Posterior vena cava (tissue), 2 donors: ENCODE measurements at regions of chr15 and their contacts with region 1.

Region 1: DNA sequence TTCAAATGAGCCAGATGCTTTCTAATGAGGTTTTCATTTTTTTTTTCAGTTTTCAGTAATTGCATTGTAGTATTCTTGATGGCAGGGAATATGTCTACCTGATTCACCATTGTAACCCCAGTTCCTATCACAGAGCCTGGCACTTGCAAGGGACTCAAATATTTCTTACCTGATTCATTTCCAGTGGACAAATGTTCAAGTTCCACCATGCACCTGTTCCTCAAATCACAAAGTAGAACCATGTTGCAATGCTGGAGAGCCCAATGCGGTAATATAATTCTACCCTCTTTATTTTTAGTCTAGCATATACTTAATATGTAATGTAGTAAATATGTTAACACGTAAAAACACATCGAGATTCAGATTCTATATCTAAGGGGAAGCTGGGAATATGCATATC is 722.6 kb downstream of the AGBL1 start:
- DNase-seq: no peak

Region 2: GRCh38 chr15:86973376-86973775 is 171.1 kb after region 1 on chr15:
- intact Hi-C with region 1: loop called in 1 of 2 experiments (anchors 5 kb)
- DNase-seq: no peak